ENCODE measurements at regions of chr20 and their contacts with region 1.

Region 1: DNA sequence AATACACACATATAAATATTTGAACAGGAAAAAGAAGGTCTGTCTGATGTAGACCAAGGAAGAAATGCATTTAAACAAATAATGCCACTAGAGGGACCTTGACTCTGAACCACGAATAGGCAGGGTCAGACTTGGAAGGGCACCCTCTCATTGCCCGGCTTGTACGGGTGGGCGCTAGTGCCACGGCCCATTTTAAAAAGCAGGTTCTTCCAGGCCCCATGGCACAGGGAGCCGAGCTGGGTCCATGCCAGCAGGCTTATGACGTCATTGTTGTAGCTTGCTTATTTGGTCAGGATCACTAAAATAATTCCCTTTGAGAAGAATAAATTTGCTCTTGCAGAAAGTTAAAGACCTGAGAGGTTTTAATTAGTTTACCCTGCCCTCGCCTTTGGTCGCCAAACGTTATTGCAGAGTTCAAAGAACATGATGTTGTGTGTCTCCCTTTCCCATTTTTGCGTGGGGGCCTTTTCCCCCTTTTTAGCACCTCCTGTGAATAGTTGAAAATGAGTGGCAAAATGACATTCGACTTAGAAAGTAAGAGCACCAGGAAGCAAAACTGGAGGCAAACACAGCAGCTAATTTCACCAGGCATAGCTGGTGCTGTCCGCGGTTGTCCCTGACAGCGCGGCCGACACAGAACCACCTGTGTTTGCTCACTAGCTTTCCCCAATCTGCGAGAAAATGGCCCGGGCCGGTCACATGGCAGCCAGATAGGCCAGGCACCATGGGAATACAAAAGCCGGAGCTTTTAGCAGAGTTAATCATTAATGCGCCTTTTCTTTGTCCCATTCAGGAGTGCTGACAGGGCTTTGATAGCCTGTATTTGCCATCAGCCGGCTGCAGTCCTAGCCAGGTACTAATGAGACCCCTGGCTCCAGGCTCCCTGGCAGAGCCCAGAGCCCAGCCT is 93.8 kb downstream of the FOXA2 start:
- DNase-seq: peak; percentile 98
- H3K4me3 ChIP-seq: peak overlapping the region; percentile 11
- H3K4me3 Mint-ChIP-seq: peak overlapping the region; percentile 68
- H3K27ac Mint-ChIP-seq: peak overlapping the region; percentile 98
- H3K4me1 ChIP-seq: peaks cover 32% of the 10 kb centered on the region
- H3K4me1 Mint-ChIP-seq: peaks cover 30% of the 10 kb centered on the region
- H3K27me3 ChIP-seq: no peaks in the 10 kb centered on the region
- H3K27me3 Mint-ChIP-seq: no peaks in the 10 kb centered on the region
- CTCF ChIP-seq: peak; percentile 11 to 30

Region 2: DNA sequence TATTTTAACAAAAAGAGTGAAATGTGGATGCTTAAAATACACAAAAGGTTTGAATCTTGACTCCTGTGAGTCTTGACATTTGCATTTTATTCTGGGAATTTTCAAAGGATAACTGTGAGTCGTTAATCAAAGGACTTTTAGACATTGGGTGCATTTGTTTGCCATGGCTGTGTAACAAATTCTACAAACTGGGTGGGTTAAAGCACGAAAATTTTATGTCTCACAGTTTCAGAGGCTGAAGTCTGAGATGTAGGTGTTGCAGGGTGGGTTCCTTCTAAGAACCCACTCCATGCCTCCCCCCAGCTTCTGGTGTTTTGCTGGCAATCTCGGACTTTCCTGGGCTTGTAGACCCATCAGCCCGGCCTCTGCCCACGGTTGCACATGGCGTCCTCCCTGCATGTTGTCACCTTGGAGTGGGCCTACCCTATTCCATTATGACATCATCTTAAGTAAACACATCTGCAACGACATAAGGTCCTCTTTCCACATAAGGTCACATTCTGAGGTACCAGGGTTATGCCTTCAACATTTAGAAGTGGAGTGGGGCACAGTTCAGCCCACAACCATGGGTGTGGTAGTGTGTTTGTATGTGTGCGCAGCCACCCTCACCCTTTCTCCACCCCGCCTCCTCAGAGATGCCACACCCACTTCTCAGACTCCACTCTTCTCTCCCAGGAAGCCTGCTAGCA is 19.2 kb before region 1 on chr20:
- CTCF ChIA-PET with region 1: interaction called, 5 read pairs
- POLR2A ChIA-PET with region 1: interaction called, 3 read pairs
- intact Hi-C with region 1: loop called (anchors 1 kb)
- DNase-seq: peak in 1 of 2 experiments; percentile 29
- H3K4me3 ChIP-seq: no peak overlapping the region
- H3K4me3 Mint-ChIP-seq: no peak overlapping the region
- H3K27ac Mint-ChIP-seq: peak overlapping the region; percentile 28
- H3K4me1 ChIP-seq: peaks cover 17% of the 10 kb centered on the region
- H3K4me1 Mint-ChIP-seq: peaks cover 11% of the 10 kb centered on the region
- H3K27me3 ChIP-seq: no peaks in the 10 kb centered on the region
- H3K27me3 Mint-ChIP-seq: no peaks in the 10 kb centered on the region
- CTCF ChIP-seq: no peak

Region 3: GRCh38 chr20:22523499-22524392 is 33.2 kb after region 1 on chr20:
- CTCF ChIA-PET with region 1: interaction called, 13 read pairs
- POLR2A ChIA-PET with region 1: interaction called, 36 read pairs
- intact Hi-C with region 1: loop called (anchors 1 kb)
- DNase-seq: peak; percentile 90 to 92
- H3K4me3 ChIP-seq: peak overlapping the region; percentile 26
- H3K4me3 Mint-ChIP-seq: peak overlapping the region; percentile 82
- H3K27ac Mint-ChIP-seq: peak overlapping the region; percentile 99
- H3K4me1 ChIP-seq: peaks cover 41% of the 10 kb centered on the region
- H3K4me1 Mint-ChIP-seq: peaks cover 40% of the 10 kb centered on the region
- H3K27me3 ChIP-seq: no peaks in the 10 kb centered on the region
- H3K27me3 Mint-ChIP-seq: no peaks in the 10 kb centered on the region
- CTCF ChIP-seq: no peak

Region 4: DNA sequence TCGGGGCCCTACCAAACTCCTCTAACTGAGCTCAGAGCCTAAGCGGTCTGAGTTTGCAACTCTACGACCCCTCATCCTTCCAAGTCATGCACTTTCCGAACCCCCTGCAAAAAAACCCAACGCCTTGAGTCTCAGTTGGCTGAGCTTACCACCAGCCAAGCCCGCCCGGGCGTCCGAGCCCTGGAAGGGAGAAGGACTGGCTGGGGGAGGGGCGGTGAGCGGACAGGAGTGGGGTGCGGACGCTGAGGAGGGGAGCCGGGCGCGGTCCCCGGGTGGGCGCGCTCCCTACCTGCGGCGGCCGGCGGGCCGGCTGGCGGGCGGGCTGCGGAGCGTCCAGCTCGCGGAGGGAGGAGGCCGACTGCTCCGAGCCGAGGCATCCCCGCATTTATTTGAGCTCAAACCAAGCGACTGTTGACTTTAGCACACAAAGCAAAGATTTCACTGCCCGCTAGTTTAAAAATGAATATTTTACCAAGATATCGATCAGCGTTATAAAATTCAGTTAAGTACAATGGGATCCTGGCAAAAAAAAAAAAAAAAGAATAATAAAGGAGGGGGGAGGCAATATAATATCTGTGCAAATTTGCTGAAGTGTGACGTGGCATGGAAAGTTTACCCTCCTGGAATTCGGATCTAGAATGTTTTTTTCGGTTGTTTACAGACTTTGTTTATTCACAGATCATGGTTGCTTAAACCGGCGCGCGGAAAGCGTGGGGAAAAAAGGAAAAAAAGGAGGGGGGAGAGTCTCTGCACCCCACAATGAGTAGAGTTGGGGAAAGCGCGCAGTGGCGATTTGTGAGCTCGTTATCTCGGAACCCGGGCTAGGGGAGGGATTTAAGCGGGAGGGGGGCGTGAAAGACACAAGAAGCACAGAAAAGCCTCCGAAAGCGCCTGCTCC is 87.9 kb after region 1 on chr20:
- CTCF ChIA-PET with region 1: interaction called, 15 read pairs
- POLR2A ChIA-PET with region 1: interaction called, 38 read pairs
- intact Hi-C with region 1: no loop called
- DNase-seq: peak in 1 of 2 experiments; percentile 38
- H3K4me3 ChIP-seq: peak overlapping the region; percentile 23; the same call in 1 of the 2 replicates
- H3K4me3 Mint-ChIP-seq: peak overlapping the region; percentile 78
- H3K27ac Mint-ChIP-seq: peak overlapping the region; percentile 90
- H3K4me1 ChIP-seq: peaks cover 30% of the 10 kb centered on the region
- H3K4me1 Mint-ChIP-seq: peaks cover 33% of the 10 kb centered on the region
- H3K27me3 ChIP-seq: no peaks in the 10 kb centered on the region
- H3K27me3 Mint-ChIP-seq: no peaks in the 10 kb centered on the region
- CTCF ChIP-seq: no peak

Measured in Caco-2 (cell line).